Dorsolateral prefrontal cortex (tissue), 120 donors: ENCODE measurements at regions of chr2 and their contacts with region 1.

Region 1: DNA sequence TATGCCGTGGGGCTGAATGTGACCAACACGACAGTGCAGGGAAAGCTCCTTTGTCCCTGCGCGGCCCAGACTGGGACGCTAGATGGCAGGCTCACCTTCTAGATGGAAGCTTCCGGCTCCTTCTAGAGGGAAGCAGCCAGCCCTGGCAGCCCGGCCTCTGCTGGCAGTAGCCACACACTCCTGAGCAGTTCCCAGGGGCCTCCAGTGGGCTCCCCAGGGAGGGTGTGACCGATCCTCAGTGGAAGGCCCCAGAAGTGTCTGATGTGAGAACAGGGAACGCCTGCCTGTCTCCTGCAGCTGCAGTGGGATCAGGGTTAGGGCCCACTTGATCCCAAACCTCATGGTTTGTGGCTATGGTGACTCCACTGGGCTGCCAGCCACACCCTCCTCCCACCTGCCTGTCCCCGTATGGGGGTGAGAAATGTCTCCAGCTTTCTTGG is 48.5 kb upstream of the LRPPRC start:
- DNase-seq: peak; percentile 73 to 92 (median 86)
- H3K4me3 ChIP-seq: peak overlapping the region in 4 of 59 donors; percentile 1 to 14 (median 9)
- H3K27ac ChIP-seq: peak overlapping the region in 27 of 59 donors; percentile 6 to 83 (median 61)
- H3K27me3 ChIP-seq: no peaks in the 10 kb centered on the region
- CTCF ChIP-seq: peak; percentile 47 to 98 (median 92)

Region 2: DNA sequence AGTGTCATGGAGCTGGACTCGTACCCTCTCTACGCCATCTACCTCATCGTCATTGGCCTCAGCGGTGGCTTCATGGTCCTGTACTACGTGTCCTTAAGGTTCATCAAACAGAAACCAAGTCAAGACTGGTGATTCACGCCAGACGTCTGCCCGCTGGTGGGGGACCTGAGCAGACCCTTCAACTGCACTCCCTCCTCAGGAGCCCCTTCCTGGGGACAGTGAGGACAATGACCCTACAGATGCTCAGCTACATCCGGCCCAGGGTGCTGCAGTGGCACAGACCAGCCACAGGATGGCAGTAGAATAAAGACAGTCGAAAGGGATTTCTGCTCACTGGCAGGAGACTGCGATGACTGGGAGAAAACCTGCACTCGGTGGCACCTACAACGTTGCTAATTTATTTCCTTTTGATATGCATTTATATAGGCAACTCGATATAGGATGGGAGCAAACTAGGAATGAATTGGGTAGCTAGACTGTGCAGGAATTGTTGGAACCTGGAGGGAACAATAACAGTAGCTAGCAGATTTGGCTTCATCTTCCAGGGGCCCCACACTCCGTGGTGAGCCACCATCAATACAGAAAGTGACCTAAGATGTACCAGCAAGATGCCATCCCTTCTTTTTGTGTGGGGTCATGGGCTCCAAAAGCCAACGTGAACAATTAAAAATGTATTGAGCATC is 166.4 kb before region 1 on chr2:
- intact Hi-C with region 1: loop called in 1 of 2 experiments (anchors 2 kb)
- DNase-seq: peak in 9 of 10 donors; percentile 36 to 83 (median 72)
- H3K4me3 ChIP-seq: peak overlapping the region in 22 of 59 donors; percentile 0 to 50 (median 23)
- H3K27ac ChIP-seq: no peak overlapping the region
- H3K27me3 ChIP-seq: peaks cover 0 to 5% (median 0%) of the 10 kb centered on the region in 45 donors
- CTCF ChIP-seq: peak; percentile 76 to 99 (median 94)

Region 3: GRCh38 chr2:44087036-44087713 is 42.9 kb after region 1 on chr2:
- intact Hi-C with region 1: loop called in 1 of 2 experiments (anchors 5 kb)
- DNase-seq: peak; percentile 83 to 93 (median 89)
- H3K4me3 ChIP-seq: peak overlapping the region in 58 of 59 donors; percentile 18 to 69 (median 46)
- H3K27ac ChIP-seq: peak overlapping the region; percentile 58 to 99 (median 95)
- H3K27me3 ChIP-seq: no peaks in the 10 kb centered on the region
- CTCF ChIP-seq: peak; percentile 90 to 100 (median 97)

Region 4: GRCh38 chr2:44291281-44292248 is 247.3 kb after region 1 on chr2:
- intact Hi-C with region 1: loop called (anchors 5 kb)
- DNase-seq: peak in 9 of 10 donors; percentile 21 to 77 (median 57)
- H3K4me3 ChIP-seq: peak overlapping the region in 27 of 59 donors; percentile 1 to 48 (median 26)
- H3K27ac ChIP-seq: peak overlapping the region in 42 of 59 donors; percentile 5 to 80 (median 60)
- H3K27me3 ChIP-seq: no peaks in the 10 kb centered on the region
- CTCF ChIP-seq: peak; percentile 11 to 91 (median 70)

Region 5: DNA sequence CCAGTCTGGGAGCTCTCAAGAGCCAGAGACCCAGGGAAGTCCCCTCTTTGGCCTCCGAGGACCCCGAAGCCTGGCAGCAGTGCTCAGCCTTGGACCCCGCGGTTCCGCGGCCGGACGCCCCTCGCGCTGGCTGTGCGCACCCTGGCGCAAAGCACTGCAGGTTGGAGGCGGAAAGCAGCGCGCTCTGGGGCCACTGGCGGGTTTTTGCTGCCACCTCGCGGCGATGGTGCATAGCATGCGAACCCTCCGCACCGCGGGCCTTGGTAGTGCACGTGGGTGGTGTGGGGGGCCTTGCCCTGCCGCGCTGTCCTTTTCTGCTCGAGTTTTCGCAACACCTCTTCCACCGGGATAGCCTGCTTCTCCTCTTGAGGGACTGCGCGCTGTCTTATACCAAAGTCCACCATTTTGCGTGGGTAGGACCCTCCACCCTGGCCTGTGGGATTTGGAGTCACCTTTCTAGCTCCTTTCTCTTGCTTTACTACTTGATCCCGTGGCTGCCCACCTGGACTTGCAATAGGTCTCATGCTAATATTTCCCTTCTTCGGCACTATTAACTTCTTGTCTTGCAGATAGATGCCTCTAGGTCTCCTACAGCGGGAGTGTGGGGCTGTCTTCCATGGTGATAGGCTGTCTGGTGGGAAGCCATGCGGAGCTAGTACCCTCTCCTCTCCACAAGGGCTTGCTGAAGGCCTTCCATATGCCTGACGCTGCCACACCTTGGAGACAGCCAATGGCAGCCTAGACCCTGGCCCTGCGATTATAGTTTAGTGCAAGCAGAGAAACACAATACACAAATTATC is 911.5 kb after region 1 on chr2:
- intact Hi-C with region 1: loop called in 1 of 2 experiments (anchors 5 kb)
- DNase-seq: peak; percentile 57 to 87 (median 71)
- H3K4me3 ChIP-seq: peak overlapping the region; percentile 18 to 74 (median 49)
- H3K27ac ChIP-seq: no peak overlapping the region
- H3K27me3 ChIP-seq: peaks cover 0 to 85% (median 54%) of the 10 kb centered on the region in 45 donors
- CTCF ChIP-seq: peak in 55 of 56 donors; percentile 68 to 98 (median 92)